Astrocyte of the cerebellum (primary cell): ENCODE measurements at regions of chr3 and their contacts with region 1.

Region 1: GRCh38 chr3:138915503-138916498 is 31.1 kb downstream of the FOXL2 start:
- DNase-seq: peak; percentile 85
- H3K4me3 ChIP-seq: peak overlapping the region; percentile 72
- CTCF ChIP-seq: peak; percentile 73

Region 2: DNA sequence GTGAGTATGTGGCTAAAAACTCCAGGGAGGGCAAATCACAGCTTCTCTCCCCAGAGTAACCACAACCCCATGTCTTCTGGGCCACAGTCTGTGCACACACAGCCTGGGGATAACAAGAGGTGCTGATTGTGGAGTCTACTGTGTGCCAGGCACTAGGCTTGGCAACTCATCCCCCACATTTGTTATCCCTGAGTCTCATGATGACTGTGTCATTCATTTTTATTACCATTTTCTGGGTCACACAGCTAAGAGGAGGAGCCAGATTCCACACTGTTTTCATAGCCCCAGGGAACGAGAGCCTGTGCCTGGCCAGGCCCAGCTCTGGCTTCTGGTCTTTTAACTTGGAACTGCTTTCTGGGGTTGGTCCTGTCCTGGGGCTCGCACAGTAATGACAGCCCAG is 446.9 kb before region 1 on chr3:
- in situ Hi-C with region 1: loop called (anchors 25 kb)
- DNase-seq: no peak
- H3K4me3 ChIP-seq: no peak overlapping the region
- CTCF ChIP-seq: no peak

Region 3: GRCh38 chr3:138686771-138687221 is 229.0 kb before region 1 on chr3:
- in situ Hi-C with region 1: loop called (anchors 25 kb)
- DNase-seq: peak; percentile 75
- H3K4me3 ChIP-seq: no peak overlapping the region
- CTCF ChIP-seq: no peak

Region 4: GRCh38 chr3:138726946-138727730 is 188.7 kb before region 1 on chr3:
- in situ Hi-C with region 1: no loop called
- DNase-seq: peak; percentile 52
- H3K4me3 ChIP-seq: no peak overlapping the region
- CTCF ChIP-seq: no peak

Region 5: DNA sequence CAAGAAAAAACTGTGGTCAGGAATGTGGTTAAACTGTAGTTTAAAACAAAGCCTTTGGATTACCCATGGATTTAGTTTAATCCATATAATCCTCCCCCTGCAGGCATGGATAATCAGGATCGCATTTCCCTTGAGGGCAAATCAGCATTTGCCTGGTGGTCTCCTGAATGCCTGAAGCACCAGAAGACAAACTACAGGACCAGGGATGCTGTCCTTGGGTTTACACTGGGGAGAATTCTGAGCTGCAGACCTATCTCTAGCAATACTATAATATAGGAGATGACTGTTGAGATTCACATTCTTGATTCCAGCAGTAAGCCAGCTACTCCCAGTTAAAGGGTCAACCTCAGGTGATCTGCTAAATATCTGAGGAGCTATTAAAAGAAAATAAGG is 91.7 kb before region 1 on chr3:
- in situ Hi-C with region 1: loop called (anchors 25 kb)
- DNase-seq: no peak
- H3K4me3 ChIP-seq: no peak overlapping the region
- CTCF ChIP-seq: no peak

Region 6: GRCh38 chr3:138862924-138863775 is 52.7 kb before region 1 on chr3:
- in situ Hi-C with region 1: no loop called
- DNase-seq: peak; percentile 32
- H3K4me3 ChIP-seq: no peak overlapping the region
- CTCF ChIP-seq: no peak

Region 7: DNA sequence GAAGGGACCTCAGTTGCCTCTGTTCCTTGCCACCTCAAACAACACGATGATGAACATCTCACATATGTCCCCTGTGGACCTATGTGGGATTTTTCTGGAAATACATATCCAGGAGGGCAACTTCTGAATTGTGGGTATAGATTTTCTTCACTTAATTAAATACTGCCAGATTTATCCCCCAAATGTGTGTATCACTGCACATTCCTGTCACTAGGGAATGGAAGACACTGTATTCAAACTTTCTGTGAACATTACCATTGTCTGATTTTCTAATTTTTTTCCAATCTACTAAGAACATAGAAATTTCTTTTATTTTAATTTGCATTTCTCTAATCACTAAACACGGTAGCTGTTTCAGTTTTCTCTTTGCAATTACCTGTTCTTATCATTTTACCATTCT is 326.0 kb after region 1 on chr3:
- in situ Hi-C with region 1: no loop called
- DNase-seq: no peak
- H3K4me3 ChIP-seq: no peak overlapping the region
- CTCF ChIP-seq: no peak